Breast epithelium (tissue), 4 donors: ENCODE measurements at regions of chr12 and their contacts with region 1.

Region 1: GRCh38 chr12:4745249-4745648 is 25.0 kb downstream of the GALNT8 start:
- DNase-seq: no peak
- H3K4me3 ChIP-seq: no peak overlapping the region
- H3K27ac ChIP-seq: no peak overlapping the region
- H3K4me1 ChIP-seq: no peaks in the 10 kb centered on the region
- H3K27me3 ChIP-seq: no peaks in the 10 kb centered on the region
- CTCF ChIP-seq: no peak
- POLR2A ChIP-seq: no peak

Region 2: GRCh38 chr12:4104722-4105244 is 640.5 kb before region 1 on chr12:
- intact Hi-C with region 1: loop called (anchors 5 kb)
- DNase-seq: no peak
- H3K4me3 ChIP-seq: no peak overlapping the region
- H3K27ac ChIP-seq: no peak overlapping the region
- H3K4me1 ChIP-seq: no peaks in the 10 kb centered on the region
- H3K27me3 ChIP-seq: no peaks in the 10 kb centered on the region
- CTCF ChIP-seq: no peak
- POLR2A ChIP-seq: no peak

Region 3: DNA sequence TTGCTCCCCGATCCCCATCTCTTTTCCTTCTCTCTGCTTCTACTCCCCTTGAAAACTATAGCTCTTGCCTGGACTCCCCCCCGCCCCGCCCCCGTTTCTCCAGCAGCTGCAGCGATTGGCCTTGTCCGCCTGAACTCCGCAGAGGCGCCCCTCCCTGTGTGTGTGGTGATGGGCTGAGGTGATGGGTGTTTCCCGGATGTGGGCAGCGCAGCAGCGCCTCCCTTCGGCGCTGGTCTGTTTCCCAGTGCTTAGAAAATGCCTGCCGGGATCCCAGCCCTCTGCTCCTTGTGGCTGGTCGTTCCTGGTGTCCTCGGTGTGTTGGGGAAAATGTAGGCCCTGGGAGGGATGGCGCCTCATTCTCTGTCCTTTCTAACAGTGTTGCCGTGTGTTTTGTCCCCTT is 18.3 kb after region 1 on chr12:
- intact Hi-C with region 1: no loop called
- DNase-seq: peak in 1 of 2 donors; percentile 38
- H3K4me3 ChIP-seq: peak overlapping the region in 2 of 3 donors; percentile 10 to 50
- H3K27ac ChIP-seq: peak overlapping the region in 1 of 2 donors; percentile 32
- H3K4me1 ChIP-seq: no peaks in the 10 kb centered on the region
- H3K27me3 ChIP-seq: no peaks in the 10 kb centered on the region
- CTCF ChIP-seq: no peak
- POLR2A ChIP-seq: no peak

Region 4: GRCh38 chr12:4796694-4797482 is 51.6 kb after region 1 on chr12:
- intact Hi-C with region 1: no loop called
- DNase-seq: no peak
- H3K4me3 ChIP-seq: no peak overlapping the region
- H3K27ac ChIP-seq: no peak overlapping the region
- H3K4me1 ChIP-seq: no peaks in the 10 kb centered on the region
- H3K27me3 ChIP-seq: no peaks in the 10 kb centered on the region
- CTCF ChIP-seq: no peak
- POLR2A ChIP-seq: no peak